ENCODE measurements at regions of chr19 and their contacts with region 1.

Region 1: DNA sequence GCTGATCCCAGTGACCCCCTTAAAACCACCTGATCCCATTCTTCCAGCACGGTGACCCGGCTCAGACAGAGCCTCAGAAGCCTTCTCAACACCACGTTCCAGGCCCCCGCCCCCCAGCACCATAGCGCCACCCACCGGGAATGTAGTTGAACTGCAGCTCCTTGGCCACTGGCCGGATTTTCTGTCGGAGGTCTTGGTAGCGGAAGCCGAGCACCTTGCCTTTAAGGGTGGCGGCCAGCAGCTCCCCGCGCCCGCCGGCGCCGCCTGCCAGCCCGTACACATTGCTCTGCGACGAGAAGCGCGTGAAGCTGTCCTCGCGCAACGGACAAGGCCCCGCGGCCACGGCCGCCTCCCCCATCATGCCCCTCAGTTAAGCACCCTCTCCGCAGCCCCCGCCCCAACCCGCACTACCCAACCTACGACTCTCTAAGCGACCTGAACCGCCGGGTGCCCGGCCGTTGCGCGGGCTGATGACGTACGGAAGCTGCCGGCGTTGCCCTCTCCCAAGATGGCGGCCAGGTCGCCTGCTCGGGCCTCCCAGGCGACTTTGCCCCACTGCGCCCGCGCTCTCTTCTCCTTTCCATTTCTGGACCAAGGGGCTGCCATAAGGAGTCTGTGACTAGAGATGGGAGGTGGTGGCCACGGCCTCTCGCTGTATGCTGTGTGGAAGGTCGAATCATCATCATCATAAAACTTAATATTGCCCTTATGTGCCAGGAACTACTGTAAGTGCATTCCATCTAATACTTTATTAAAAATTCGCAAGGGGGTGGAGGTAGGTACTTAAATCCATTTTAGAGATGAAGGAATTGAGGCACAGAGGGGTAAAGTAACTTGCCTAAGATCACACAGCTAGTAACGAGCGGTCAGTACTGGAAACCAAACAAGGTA is at the start of gene KPTN:
- DNase-seq: peak; percentile 78 to 94 (median 83)
- ATAC-seq: peak; percentile 83
- H3K4me3 ChIP-seq: peak within 1 kb of the TSS; percentile 82
- H3K4me3 Mint-ChIP-seq: peak within 1 kb of the TSS; percentile 97
- H3K27ac ChIP-seq: peak within 1 kb of the TSS; percentile 73 to 94
- H3K27ac Mint-ChIP-seq: peak within 1 kb of the TSS; percentile 96
- H3K4me1 ChIP-seq: peaks cover 33% of the 10 kb centered on the region
- H3K4me1 Mint-ChIP-seq: peaks cover 37% of the 10 kb centered on the region
- H3K27me3 ChIP-seq: no peaks in the 10 kb centered on the region
- H3K27me3 Mint-ChIP-seq: no peaks in the 10 kb centered on the region
- CTCF ChIP-seq: peak; percentile 75
- total RNA-seq, gene KPTN: 3.6 to 4.5 TPM

Region 2: DNA sequence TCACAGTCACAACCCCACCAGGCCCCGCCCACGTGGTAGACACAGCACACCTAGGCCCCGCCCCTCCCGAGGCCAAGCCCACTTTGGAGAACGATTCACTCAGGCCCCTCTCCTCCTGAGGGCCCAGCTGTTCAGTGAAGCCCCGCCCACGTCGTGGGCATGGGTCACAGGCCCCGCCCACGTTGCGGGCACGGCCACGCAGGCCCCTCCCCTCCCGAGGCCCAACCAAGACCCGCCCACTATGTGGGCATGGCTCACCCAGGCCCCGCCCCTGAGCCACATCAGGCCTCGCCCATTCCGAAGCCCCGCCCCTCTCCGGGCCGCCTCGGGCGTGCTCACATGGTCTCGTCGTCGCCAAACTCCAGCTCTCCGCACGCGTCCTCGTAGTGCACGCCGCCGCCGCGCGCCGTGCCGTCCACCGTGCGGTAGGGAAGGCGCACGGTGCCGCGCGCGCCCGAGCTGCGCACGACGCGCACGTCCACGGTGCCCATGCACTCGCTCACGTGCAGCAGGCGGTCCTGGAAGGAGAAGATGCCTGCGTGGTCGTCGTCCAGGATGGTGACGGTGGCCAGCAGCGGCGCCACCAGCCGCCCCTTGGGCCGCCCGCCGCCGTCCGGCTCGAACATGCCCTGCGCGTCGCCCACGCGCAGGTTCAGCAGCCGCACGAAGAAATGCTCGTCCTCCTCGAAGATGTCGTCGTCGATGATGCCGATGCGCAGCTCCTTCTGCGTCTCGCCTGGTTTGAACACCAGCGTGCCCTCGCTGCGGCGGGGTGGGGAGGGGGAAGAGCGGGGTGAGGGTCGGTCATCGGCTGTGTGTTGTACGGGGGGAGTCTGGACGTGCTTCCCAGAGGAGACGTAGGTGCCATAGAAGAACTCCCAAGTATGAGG is 36.3 kb before region 1 on chr19:
- CTCF ChIA-PET with region 1: interaction called, 3 read pairs
- POLR2A ChIA-PET with region 1: no interaction called
- intact Hi-C with region 1: loop called in 1 of 2 experiments (anchors 5 kb)
- DNase-seq: peak in 12 of 14 experiments; percentile 23 to 81 (median 53)
- ATAC-seq: peak; percentile 64
- H3K4me3 ChIP-seq: peak overlapping the region; percentile 10
- H3K4me3 Mint-ChIP-seq: peak overlapping the region; percentile 79
- H3K27ac ChIP-seq: no peak overlapping the region
- H3K27ac Mint-ChIP-seq: no peak overlapping the region
- H3K4me1 ChIP-seq: peaks cover 51% of the 10 kb centered on the region
- H3K4me1 Mint-ChIP-seq: peaks cover 53% of the 10 kb centered on the region
- H3K27me3 ChIP-seq: peaks cover 23 to 31% of the 10 kb centered on the region in 2 experiments
- H3K27me3 Mint-ChIP-seq: peaks cover 71% of the 10 kb centered on the region
- CTCF ChIP-seq: no peak

Region 3: GRCh38 chr19:47514869-47515588 is 31.0 kb after region 1 on chr19 and contains the start of gene NAPA:
- CTCF ChIA-PET with region 1: interaction called, 25 read pairs
- POLR2A ChIA-PET with region 1: interaction called, 30 read pairs
- intact Hi-C with region 1: loop called in 1 of 2 experiments (anchors 1 kb)
- DNase-seq: peak; percentile 100
- ATAC-seq: peak; percentile 92
- H3K4me3 ChIP-seq: peak within 1 kb of the TSS; percentile 97
- H3K4me3 Mint-ChIP-seq: peak within 1 kb of the TSS; percentile 99
- H3K27ac ChIP-seq: peak within 1 kb of the TSS; percentile 93 to 98
- H3K27ac Mint-ChIP-seq: peak within 1 kb of the TSS; percentile 96
- H3K4me1 ChIP-seq: peaks cover 77% of the 10 kb centered on the region
- H3K4me1 Mint-ChIP-seq: peaks cover 88% of the 10 kb centered on the region
- H3K27me3 ChIP-seq: no peaks in the 10 kb centered on the region
- H3K27me3 Mint-ChIP-seq: no peaks in the 10 kb centered on the region
- CTCF ChIP-seq: no peak
- total RNA-seq, gene NAPA: 135 to 145 TPM

Region 4: DNA sequence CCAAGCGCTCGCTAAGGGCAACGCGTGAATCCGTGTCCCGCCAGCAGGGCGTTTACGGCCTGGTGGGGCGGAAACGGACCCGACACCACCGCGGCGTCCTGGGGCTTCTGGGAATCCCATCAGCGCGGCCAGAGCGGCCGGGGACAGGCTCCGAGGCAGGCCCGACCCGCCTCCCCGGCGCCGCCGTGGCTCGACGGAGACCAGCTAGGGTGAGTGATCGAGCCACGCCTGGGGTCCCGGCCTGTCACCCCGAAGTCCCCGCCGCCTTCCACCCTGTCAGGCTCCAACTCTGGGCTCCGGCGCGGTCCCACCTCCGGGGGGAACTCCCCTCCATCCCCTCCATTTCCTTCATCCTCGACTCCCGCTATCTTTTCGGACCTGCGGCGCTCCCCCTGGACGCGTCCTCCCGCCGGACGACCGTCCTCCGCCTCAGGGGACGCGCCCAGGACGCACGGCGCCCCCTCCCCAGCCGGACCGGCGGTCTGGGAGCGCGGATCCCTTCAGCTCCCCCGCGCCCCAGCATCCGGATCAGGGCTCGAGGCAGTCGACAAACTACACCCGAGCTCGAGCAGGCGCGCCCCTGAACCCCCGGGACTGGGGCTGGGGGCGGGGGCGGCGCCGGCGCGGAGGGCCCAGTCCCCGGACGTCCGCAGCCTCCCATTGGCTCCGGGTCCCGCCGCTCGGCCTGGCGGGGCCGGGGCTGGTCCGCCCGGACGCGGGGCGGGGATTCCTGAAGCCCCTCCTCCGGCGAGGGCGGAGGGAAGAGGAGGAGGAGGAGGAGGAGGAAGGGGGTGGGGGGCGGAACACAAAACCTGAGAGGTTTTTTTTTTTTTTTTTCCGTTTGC is 124.3 kb after region 1 on chr19:
- CTCF ChIA-PET with region 1: interaction called, 5 read pairs
- POLR2A ChIA-PET with region 1: interaction called, 13 read pairs
- intact Hi-C with region 1: loop called in 1 of 2 experiments (anchors 1 kb)
- DNase-seq: peak; percentile 91 to 98 (median 96)
- ATAC-seq: peak; percentile 81
- H3K4me3 ChIP-seq: peak overlapping the region; percentile 85
- H3K4me3 Mint-ChIP-seq: peak overlapping the region; percentile 91
- H3K27ac ChIP-seq: peak overlapping the region; percentile 62 to 88
- H3K27ac Mint-ChIP-seq: peak overlapping the region; percentile 91
- H3K4me1 ChIP-seq: peaks cover 40% of the 10 kb centered on the region
- H3K4me1 Mint-ChIP-seq: peaks cover 30% of the 10 kb centered on the region
- H3K27me3 ChIP-seq: no peaks in the 10 kb centered on the region
- H3K27me3 Mint-ChIP-seq: no peaks in the 10 kb centered on the region
- CTCF ChIP-seq: no peak